BJ (cell line): ENCODE measurements at regions of chr17 and their contacts with region 1.

Region 1: DNA sequence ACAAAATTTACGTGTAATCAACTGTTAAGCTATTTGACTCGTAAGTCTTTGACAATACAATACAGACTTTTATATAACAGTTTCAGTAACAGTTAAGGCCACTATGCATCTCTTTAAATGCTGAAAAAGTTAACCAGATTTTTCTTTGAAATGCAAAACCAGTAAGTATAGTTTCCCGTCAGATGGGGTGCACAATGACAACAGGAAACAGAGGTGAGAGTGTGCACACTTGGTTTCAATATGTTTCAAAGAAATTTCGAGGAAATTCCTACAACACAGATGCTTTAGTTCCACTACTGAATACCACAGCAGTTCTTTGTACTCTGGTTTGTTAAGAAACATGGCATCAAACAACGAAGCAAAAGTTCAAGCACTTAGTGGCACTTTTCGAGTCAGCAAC is 48.4 kb downstream of the RNF157 start:
- DNase-seq: no peak
- H3K4me3 ChIP-seq: no peak overlapping the region
- H3K27me3 ChIP-seq: peaks cover 6% of the 10 kb centered on the region
- CTCF ChIP-seq: no peak

Region 2: DNA sequence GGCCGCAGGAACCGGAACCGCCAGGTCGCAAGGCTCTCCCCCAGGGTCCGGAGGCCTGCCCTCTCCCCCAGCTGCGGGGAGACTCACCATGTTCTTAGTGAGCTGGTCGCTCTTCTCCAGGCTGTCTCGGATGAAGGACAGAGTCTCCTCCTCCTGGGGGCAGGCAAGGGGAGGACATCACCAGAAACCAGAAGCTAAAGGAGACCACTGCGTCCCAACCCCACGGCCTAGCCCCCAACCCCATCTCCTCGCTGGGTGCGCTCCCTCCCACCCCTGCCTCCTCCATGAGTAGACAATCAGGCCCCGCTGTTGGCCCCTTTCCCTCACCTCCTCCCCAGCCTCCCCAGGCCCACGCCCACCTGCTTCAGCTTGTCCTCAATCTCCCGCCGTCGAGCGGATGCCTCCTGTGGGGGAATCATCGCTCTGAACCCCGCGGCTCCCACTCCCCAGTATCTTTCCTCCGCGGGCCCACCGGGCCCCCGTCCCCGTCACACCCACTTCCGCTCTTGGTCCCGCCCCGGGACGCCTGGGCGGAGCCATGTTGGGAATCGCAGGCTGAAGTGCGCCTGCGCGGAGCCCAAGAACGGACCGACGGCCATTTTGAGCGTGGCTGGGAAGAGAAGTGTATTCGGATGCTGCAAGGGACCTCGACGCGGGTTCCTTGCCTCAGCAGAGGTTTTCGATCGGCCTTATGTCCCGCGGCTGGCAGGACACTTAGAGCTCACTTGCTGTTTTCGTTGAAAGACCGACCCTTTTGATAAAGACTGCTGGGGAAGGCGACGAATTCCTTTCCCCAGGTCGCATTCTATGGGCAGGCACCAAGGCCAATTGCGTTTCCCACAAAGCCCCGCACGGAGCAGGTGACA is 88.4 kb before region 1 on chr17 and contains the start of gene EXOC7:
- CTCF ChIA-PET with region 1: no interaction called
- POLR2A ChIA-PET with region 1: no interaction called
- DNase-seq: peak; percentile 39
- H3K4me3 ChIP-seq: peak within 1 kb of the TSS; percentile 98
- H3K27me3 ChIP-seq: no peaks in the 10 kb centered on the region
- CTCF ChIP-seq: peak; percentile 24; the same call in 1 of the 2 replicates
- polyA plus RNA-seq, gene EXOC7: 91.7 and 122 TPM in 2 replicates

Region 3: GRCh38 chr17:76252040-76252954 is 60.4 kb after region 1 on chr17:
- CTCF ChIA-PET with region 1: no interaction called
- POLR2A ChIA-PET with region 1: interaction called, 16 read pairs
- DNase-seq: peak; percentile 97
- H3K4me3 ChIP-seq: no peak overlapping the region
- H3K27me3 ChIP-seq: no peaks in the 10 kb centered on the region
- CTCF ChIP-seq: no peak